H1 (cell line): ENCODE measurements at regions of chr10 and their contacts with region 1.

Region 1: DNA sequence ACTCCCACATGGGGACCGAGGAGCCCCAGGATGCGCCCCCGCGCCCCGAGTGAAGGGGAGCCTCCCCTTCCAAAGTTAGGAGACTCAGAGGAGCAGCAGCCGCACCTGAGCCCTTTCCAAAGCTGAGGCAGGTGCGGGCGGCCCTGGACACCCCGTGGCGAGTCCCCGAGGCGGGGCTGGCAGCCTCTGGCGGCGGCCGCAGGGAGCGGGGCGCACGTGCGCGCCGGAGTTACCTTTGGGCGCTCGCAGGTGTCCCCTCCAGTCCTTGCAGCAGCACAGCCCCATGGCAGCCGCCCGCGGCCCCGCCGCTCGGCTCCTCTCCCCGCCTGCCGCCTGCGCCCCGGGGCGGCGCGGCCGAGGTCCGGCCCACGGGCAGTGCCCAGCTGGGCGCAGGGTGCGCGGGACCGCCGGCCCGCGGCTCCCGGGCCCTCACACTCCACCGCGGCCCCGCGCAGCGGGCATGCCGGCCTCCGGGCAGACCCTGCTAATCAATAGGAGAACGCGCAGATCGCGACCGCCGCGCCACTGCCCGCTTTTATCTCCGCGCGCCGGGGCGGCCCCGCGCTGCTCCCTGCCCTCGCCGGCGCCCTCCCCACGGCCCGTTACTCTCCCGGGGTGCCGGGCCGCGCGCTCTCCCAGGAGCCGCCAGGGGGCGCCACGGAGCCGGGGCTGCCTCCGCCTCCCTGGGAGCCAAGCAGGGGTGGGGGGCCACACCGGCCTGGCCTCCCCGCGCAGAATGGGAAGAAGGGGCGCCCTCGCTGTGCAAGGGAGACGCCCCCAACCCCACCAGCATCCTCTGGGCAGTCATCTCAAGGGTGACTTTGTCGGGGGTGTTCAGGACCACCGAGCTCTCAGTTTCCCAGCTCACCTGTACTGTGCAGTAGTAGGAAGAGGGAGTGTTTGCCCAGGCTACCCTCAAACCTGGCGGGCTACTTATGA is 80.8 kb downstream of the ARHGAP22 start:
- DNase-seq: peak in 1 of 2 experiments; percentile 83
- H3K4me3 ChIP-seq: peak overlapping the region; percentile 54 to 78 (median 73)
- H3K27ac ChIP-seq: no peak overlapping the region
- H3K4me1 ChIP-seq: peaks cover 2 to 16% (median 3%) of the 10 kb centered on the region in 4 experiments; a peak in 6 of 7 replicates
- H3K27me3 ChIP-seq: peaks cover 0 to 2% (median 0%) of the 10 kb centered on the region in 4 experiments; a peak in 1 of 7 replicates
- CTCF ChIP-seq: peak; percentile 56 to 82 (median 71)
- EP300 ChIP-seq: no peak; a peak in 1 of 3 replicates
- POLR2A ChIP-seq: no peak
- RAD21 ChIP-seq: peak; percentile 41 to 73; a peak in 3 of 4 replicates

Region 2: DNA sequence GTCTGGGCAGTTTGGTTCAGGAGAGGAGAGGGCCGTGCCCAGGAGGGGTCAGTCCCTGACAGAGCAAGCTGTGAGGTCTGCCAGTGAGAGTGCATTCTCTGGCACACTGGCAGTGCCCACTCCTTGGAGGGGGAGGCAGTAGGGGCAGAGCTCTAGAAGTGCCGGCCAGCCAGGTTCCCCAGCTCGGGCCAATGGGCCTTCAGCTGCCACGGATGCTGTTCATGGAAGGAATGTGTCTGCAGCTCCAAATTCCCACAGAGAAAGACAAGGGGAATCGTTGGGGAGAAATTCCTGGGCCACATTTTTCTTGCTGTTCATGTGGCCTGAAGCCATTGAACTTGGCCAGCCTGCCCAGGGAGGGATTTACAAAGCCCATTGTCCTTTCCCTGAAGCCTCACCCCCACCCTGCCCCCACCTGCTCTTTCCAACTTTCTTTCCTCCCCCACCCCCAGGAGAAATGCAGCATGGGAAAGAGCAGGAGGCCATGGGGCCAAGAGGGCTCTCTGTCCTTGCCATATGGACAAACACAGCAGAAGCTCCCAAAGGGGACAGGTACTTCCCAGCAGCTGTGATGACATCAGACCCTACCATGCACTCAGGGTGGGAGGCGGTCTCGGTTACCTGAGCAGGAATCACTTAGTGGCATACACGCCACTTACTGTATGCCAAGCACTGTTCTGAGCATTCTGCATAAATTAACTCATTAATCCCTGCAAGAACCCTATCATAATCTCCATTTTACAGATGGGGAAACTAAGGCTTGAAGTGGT is 10.0 kb after region 1 on chr10:
- CTCF ChIA-PET with region 1: interaction called, 69 read pairs
- POLR2A ChIA-PET with region 1: interaction called, 7 read pairs
- DNase-seq: no peak
- H3K4me3 ChIP-seq: peak overlapping the region in 1 of 4 experiments; percentile 1; a peak in 1 of 8 replicates
- H3K27ac ChIP-seq: peak overlapping the region; percentile 17; the same call in 1 of the 2 replicates
- H3K4me1 ChIP-seq: peaks cover 0 to 31% (median 22%) of the 10 kb centered on the region in 4 experiments; a peak in 6 of 7 replicates
- H3K27me3 ChIP-seq: no peaks in the 10 kb centered on the region
- CTCF ChIP-seq: no peak
- EP300 ChIP-seq: no peak
- POLR2A ChIP-seq: no peak
- RAD21 ChIP-seq: no peak